H1 (cell line): ENCODE measurements at regions of chr17 and their contacts with region 1.

Region 1: GRCh38 chr17:48997083-48997826 is at the start of gene IGF2BP1:
- DNase-seq: peak; percentile 77 to 82
- H3K4me3 ChIP-seq: peak within 1 kb of the TSS; percentile 91 to 100 (median 96)
- H3K27ac ChIP-seq: peak within 1 kb of the TSS; percentile 98
- H3K4me1 ChIP-seq: peaks cover 0 to 10% (median 4%) of the 10 kb centered on the region in 4 experiments; a peak in 4 of 7 replicates
- H3K27me3 ChIP-seq: no peaks in the 10 kb centered on the region
- CTCF ChIP-seq: no peak
- EP300 ChIP-seq: peak in 1 of 2 experiments; percentile 21; a peak in 1 of 3 replicates
- POLR2A ChIP-seq: peak; percentile 19 to 58
- RAD21 ChIP-seq: no peak
- total RNA-seq, gene IGF2BP1: 487 and 513 TPM in 2 replicates

Region 2: GRCh38 chr17:48908047-48908843 is 89.0 kb before region 1 on chr17 and contains the start of gene UBE2Z:
- CTCF ChIA-PET with region 1: no interaction called
- POLR2A ChIA-PET with region 1: interaction called, 28 read pairs
- DNase-seq: peak; percentile 88 to 94
- H3K4me3 ChIP-seq: peak within 1 kb of the TSS; percentile 74 to 97 (median 80)
- H3K27ac ChIP-seq: peak within 1 kb of the TSS; percentile 89
- H3K4me1 ChIP-seq: peaks cover 5 to 17% (median 6%) of the 10 kb centered on the region in 4 experiments
- H3K27me3 ChIP-seq: no peaks in the 10 kb centered on the region
- CTCF ChIP-seq: peak; percentile 31 to 52 (median 39)
- EP300 ChIP-seq: no peak
- POLR2A ChIP-seq: peak; percentile 84 to 90
- RAD21 ChIP-seq: 0 out of 4 replicates have a peak, but pooled peaks of 1 of the 2 experiments have one; percentile 5
- total RNA-seq, gene UBE2Z: 75.3 and 75.9 TPM in 2 replicates

Region 3: DNA sequence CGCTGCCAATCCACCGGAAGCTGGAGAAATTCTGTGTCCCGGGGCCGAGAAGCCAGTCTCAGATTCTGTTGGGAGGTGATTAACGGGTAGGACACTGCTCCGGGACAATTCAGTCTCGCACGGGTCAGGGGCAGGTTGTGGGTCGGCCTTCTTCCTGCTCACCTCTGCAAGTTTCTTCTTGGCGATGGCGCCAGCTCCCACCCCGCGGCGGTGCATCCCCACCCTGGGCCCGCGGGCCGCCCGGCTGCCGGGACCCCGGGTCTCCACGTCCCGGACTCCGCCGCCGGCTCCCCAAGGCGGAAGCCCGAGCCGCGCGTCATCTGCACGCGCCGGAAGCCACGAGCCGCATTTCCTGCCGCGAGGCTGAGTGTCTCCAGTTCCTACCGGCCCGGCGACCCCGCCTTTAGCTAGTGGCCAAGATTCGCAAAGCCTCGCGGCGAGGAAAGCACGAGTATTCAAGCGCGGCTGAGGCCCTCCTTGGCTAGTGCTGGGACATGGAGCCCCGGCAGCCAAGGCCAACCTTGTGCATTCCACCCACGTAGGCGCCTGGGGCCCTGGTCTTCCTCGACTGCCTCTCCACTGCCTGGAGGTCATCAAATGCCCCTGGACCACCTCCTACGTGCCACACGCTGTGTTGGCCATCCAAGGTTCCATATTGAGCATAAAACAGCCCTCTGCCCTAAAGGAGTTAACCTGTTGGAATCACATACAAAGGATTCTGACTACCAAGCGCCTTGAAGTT is 52.6 kb before region 1 on chr17 and contains the start of gene SNF8:
- CTCF ChIA-PET with region 1: interaction called, 5 read pairs
- POLR2A ChIA-PET with region 1: interaction called, 46 read pairs
- DNase-seq: peak; percentile 75 to 98
- H3K4me3 ChIP-seq: peak within 1 kb of the TSS; percentile 64 to 93 (median 88)
- H3K27ac ChIP-seq: peak within 1 kb of the TSS; percentile 95
- H3K4me1 ChIP-seq: peaks cover 3 to 7% (median 4%) of the 10 kb centered on the region in 4 experiments; a peak in 4 of 7 replicates
- H3K27me3 ChIP-seq: no peaks in the 10 kb centered on the region
- CTCF ChIP-seq: no peak
- EP300 ChIP-seq: peak in 1 of 2 experiments; percentile 11; a peak in 1 of 3 replicates
- POLR2A ChIP-seq: peak; percentile 84 to 98
- RAD21 ChIP-seq: peak in 1 of 2 experiments; percentile 3; a peak in 1 of 4 replicates
- total RNA-seq, gene SNF8: 130 and 133 TPM in 2 replicates

Region 4: DNA sequence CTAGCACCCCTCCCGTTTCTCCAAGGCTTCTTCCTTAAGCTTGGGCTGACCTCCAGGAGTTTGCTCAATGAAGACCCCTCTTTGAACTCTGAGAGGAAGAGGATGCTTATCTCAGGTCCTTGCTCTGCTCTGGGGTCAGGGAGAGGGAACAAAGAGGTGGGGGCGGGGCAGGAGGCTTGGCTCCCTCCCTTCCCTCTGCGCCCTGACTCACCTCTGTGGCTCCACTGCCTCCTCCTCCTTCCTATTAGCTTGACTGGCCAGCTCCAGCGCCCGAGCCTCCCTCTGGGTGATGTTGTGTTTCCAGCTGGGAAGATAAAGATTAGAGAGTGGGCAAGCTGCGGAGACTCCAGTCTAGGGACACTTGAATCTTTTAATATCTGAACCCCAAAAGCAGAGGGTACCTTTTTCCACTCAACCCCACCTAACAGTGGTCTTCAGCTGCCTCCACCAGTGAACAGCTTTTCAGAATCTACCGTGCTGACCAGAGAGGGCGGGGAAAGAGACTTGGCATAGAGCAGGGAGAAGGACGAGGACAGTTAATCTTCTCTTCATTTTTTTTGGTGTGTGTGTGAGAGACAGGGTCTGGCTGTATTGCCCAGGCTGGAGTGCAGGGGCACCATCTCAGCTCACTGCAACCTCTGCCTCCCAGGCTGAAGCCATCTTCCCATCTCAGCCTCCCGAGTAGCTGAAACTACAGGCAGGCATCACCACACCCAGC is 35.6 kb before region 1 on chr17:
- CTCF ChIA-PET with region 1: interaction called, 4 read pairs
- POLR2A ChIA-PET with region 1: interaction called, 41 read pairs
- DNase-seq: peak in 1 of 2 experiments; percentile 66
- H3K4me3 ChIP-seq: peak overlapping the region in 2 of 4 experiments; percentile 14 to 25; a peak in 1 of 8 replicates
- H3K27ac ChIP-seq: no peak overlapping the region
- H3K4me1 ChIP-seq: peaks cover 8 to 17% (median 13%) of the 10 kb centered on the region in 4 experiments; a peak in 6 of 7 replicates
- H3K27me3 ChIP-seq: no peaks in the 10 kb centered on the region; a peak in 1 of 7 replicates
- CTCF ChIP-seq: no peak
- EP300 ChIP-seq: no peak
- POLR2A ChIP-seq: no peak
- RAD21 ChIP-seq: no peak

Region 5: DNA sequence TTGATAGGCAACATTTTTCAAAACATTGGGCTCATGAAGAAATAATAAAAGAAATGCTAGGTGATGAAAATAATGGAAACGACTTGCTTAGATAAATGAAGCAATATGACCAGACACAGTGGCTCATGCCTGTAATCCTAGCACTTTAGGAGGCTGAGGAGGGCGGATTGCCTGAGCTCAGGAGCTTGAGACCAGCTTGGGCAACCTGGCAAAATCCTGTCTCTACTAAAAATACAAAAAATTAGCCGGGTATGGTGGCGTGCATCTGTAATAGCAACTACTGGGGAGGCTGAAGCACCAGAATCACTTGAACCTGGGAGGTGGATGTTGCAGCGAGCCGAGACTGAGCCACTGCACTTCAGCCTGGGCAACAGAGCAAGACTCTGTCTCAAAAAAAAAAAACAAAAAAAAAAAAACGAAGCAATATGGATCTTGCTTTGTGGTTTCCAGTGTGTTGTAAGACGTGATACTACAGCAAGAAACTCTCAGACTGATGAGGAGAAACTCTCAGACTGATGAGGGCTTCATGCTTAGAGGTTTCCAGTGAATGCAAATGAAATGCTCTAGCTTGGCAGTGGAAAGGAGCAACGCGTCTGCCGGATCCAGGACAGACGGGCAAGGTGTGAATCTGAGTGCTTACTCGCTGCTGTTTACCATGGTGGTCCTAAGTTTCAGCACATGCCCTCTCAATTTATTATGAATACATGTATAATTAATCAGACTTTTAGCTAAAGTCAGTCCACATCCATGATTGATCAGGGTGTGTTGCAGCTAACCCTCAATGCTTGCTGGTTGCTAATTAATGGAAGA is 11.6 kb before region 1 on chr17:
- CTCF ChIA-PET with region 1: interaction called, 4 read pairs
- POLR2A ChIA-PET with region 1: interaction called, 19 read pairs
- DNase-seq: peak in 1 of 2 experiments; percentile 23
- H3K4me3 ChIP-seq: no peak overlapping the region
- H3K27ac ChIP-seq: no peak overlapping the region
- H3K4me1 ChIP-seq: peaks cover 0 to 6% (median 5%) of the 10 kb centered on the region in 4 experiments; a peak in 4 of 7 replicates
- H3K27me3 ChIP-seq: no peaks in the 10 kb centered on the region; a peak in 1 of 7 replicates
- CTCF ChIP-seq: no peak
- EP300 ChIP-seq: no peak
- POLR2A ChIP-seq: no peak
- RAD21 ChIP-seq: no peak

Region 6: GRCh38 chr17:49022391-49022941 is 25.2 kb after region 1 on chr17:
- CTCF ChIA-PET with region 1: interaction called, 4 read pairs
- POLR2A ChIA-PET with region 1: interaction called, 366 read pairs
- DNase-seq: peak; percentile 80 to 92
- H3K4me3 ChIP-seq: peak overlapping the region in 3 of 4 experiments; percentile 12 to 44 (median 26); a peak in 4 of 8 replicates
- H3K27ac ChIP-seq: peak overlapping the region; percentile 90
- H3K4me1 ChIP-seq: peaks cover 19 to 45% (median 34%) of the 10 kb centered on the region in 4 experiments
- H3K27me3 ChIP-seq: no peaks in the 10 kb centered on the region
- CTCF ChIP-seq: no peak
- EP300 ChIP-seq: peak in 1 of 2 experiments; percentile 91; a peak in 1 of 3 replicates
- POLR2A ChIP-seq: no peak; a peak in 1 of 3 replicates
- RAD21 ChIP-seq: peak in 1 of 2 experiments; percentile 7; a peak in 1 of 4 replicates